ENCODE measurements at regions of chr1 and their contacts with region 1.

Region 1: DNA sequence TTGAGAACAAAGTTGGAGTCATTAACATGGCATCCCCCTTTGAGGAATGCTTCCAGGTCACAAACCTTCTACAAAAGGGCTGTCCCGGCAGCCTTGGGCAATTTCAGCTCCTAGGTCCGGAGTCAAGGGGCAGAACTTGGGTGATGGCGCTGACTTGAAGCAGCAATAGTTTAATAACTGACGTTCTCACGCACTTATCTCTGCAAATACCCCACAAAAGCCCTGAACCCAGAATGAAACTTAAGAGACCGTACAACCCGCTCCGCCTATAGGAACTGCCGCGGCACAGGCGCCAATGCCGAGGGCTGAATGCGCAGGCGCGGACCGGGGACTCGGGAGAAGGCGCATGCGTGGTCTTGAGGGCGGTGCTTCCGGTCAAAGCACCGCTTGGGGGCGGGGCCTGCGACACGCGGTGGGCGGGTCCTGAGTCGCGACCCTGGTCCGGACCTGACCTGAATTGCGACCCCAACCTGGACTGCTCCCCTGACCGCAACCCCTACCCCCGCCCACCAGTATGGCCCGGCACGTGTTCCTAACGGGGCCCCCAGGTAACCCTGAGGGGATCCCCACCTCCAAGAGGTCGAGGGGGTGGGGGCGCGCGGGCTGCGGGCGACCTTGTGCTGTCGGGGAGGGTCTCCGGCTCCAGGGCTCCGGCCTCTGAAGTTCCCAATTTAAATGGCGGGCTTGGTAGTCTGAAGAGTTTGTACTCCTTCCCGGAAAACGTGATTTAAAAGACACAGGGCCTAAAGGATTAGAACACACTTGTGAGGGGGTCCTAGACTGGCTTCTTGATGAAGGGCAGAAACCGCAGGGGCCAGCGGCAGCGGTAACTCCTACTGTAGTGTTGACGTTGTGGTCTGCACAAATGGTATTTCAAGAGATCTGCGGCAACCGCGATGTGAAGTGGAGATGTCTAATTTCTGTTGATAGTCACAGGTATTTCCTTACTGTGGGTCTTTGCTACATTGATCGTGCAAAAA is at the start of gene NTPCR:
- DNase-seq: peak; percentile 97
- total RNA-seq, gene NTPCR: 47.1 TPM

Region 2: GRCh38 chr1:232805269-232806185 is 145.0 kb before region 1 on chr1 and contains the start of gene MAP10:
- intact Hi-C with region 1: loop called (anchors 5 kb)
- DNase-seq: peak; percentile 88
- total RNA-seq, gene MAP10: 2.3 TPM

Measured in cardiac septum (tissue), 1 donor.